Sciatic nerve (tissue), 2 donors: ENCODE measurements at regions of chr7 and their contacts with region 1.

Region 1: GRCh38 chr7:55158541-55159382 is 139.9 kb downstream of the EGFR start:
- DNase-seq: no peak
- ATAC-seq: no peak

Region 2: GRCh38 chr7:53768186-53768585 is 1390.6 kb before region 1 on chr7:
- intact Hi-C with region 1: loop called (anchors 5 kb)
- DNase-seq: no peak
- ATAC-seq: no peak

Region 3: GRCh38 chr7:54541669-54542625 is 616.8 kb before region 1 on chr7 and contains the start of gene VSTM2A:
- intact Hi-C with region 1: no loop called
- DNase-seq: no peak
- ATAC-seq: peak; percentile 36
- total RNA-seq, gene VSTM2A: not detected

Region 4: DNA sequence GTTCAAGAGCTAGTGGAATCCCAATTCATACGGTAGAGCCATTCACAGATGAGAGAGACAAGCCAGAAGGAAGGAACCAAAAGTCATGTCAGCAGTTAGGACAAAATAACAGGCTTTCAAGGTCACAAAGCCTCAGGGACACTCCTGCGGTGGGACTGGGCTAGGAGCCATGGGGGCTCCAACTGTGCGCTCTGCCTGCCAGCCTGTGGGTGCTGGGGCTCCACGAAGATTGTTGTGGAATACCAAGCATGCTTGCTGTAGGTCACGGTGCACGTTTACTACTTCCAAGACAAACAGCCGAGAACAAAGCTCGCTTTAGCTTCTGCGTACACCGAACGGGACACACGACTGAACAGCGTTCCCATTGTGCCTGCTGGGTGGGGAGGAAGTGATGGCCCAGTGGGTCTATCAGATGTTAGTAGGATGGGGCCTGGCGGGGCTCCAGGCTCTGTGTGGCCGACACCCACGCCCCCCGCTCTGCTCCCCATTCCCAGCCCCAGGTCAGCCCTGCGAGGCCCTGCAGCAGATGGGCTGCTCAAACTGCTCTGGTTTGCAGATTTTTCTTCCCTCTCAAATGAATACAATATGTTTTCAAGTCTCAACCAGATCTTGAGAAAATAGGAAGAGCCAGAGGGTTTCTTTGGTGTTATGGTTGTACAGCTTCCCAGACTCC is 19.0 kb after region 1 on chr7:
- intact Hi-C with region 1: no loop called
- DNase-seq: peak; percentile 92
- ATAC-seq: peak; percentile 93

Region 5: GRCh38 chr7:56213574-56213973 is 1054.8 kb after region 1 on chr7:
- intact Hi-C with region 1: no loop called
- DNase-seq: no peak
- ATAC-seq: no peak